ENCODE measurements at regions of chr7 and their contacts with region 1.

Region 1: DNA sequence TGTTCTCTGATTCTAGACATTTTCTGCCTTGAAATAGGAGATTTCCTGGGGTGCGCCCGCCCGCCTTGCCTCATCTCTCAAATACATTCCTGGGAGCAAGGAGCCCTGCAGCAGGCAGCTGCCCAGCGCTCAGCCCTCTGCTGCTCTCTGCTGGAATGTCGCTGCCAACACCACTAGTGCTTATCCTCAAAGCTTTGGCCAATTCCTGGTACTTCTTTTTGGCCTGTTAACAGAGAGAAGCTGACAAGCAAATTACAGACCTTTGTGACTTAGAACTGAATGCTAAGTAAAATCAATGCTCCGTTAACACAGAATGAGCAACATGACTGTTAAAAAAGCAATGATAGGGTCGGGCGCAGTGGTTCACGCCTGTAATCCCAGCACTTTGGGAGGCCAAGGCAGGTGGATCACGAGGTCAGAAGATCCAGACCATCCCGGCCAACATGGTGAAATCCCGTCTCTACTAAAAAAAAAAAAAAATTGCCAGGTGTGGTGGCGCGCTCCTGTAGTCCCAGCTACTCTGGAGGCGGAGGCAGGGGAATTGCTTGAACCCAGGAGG is 41.9 kb upstream of the SYPL1 start:
- DNase-seq: peak; percentile 62 to 85 (median 69)
- ATAC-seq: peak; percentile 98
- H3K4me3 ChIP-seq: no peak overlapping the region
- H3K4me3 Mint-ChIP-seq: no peak overlapping the region
- H3K27ac ChIP-seq: no peak overlapping the region
- H3K27ac Mint-ChIP-seq: no peak overlapping the region
- H3K4me1 ChIP-seq: peaks cover 5% of the 10 kb centered on the region
- H3K4me1 Mint-ChIP-seq: peaks cover 5% of the 10 kb centered on the region
- H3K27me3 ChIP-seq: peaks cover 0 to 6% of the 10 kb centered on the region in 2 experiments
- H3K27me3 Mint-ChIP-seq: peaks cover 28% of the 10 kb centered on the region
- CTCF ChIP-seq: peak; percentile 92

Region 2: DNA sequence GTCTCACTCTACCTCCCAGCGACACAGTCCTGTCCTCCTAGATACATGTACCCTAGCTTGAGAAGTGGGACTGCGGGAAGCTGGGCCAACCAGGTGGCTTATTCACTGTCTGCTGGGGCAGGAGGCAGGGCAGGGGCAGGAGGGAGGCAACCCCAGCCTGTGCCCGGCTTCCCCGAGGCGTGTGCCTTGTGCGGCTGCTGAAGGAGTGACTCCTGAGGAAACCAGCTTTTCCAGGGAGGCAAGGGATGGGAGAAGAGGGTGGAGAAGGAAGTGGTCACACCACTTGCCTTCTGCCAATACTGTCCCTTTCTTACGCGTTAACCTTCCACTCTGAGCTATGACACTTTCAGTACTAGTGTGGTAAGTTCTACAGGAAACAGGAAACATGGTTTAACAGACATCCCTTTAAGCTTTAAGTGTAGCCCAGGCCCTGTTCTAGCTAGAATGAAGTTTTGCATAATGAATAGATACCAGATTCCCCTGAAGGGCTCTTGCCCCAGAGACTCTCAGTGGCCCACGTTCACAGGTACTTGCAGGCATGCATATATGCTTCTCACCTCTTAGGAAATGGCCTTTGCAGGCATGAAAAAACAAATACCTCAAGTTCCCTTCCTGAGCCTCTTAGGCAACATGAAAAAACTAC is 82.5 kb before region 1 on chr7:
- CTCF ChIA-PET with region 1: interaction called, 4 read pairs
- POLR2A ChIA-PET with region 1: interaction called, 10 read pairs
- intact Hi-C with region 1: no loop called
- DNase-seq: peak in 13 of 14 experiments; percentile 11 to 83 (median 34)
- ATAC-seq: peak; percentile 95
- H3K4me3 ChIP-seq: peak overlapping the region; percentile 44
- H3K4me3 Mint-ChIP-seq: peak overlapping the region; percentile 54
- H3K27ac ChIP-seq: peak overlapping the region; percentile 79 to 86
- H3K27ac Mint-ChIP-seq: peak overlapping the region; percentile 95
- H3K4me1 ChIP-seq: peaks cover 44% of the 10 kb centered on the region
- H3K4me1 Mint-ChIP-seq: peaks cover 63% of the 10 kb centered on the region
- H3K27me3 ChIP-seq: no peaks in the 10 kb centered on the region
- H3K27me3 Mint-ChIP-seq: no peaks in the 10 kb centered on the region
- CTCF ChIP-seq: no peak

Region 3: DNA sequence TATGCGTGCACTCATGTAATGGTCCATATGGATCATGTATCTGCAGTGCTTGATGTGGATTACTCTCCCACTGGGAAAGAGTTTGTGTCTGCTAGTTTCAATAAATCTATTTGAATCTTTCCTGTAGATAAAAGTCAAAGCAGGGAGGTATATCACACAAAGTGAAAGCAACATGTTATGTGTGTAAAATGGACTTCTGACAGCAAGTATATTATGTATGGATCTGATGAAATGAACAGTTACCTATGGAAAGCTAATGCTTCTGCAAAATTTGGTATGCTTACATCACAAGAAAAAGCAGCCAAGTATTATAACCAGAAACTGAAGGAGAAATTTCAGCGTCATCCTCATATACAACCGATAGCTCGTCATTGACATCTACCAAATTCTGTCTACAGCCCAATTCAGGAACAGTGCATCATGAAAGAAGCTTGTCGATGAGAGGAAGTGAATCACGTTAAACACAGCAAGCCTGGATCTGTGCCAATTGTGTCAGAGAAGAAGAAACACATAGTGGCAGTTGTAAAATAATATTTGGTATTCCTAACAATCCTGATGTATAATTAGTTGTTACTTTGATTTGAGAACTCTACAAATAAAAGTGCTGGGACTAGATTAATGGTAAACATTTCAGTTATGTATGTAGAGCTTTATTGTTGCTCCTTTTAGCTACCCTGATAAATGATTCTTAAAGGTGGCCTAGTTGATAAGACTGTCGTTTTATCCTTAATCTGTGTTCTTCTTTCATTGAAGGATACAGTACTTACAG is 27.6 kb before region 1 on chr7:
- CTCF ChIA-PET with region 1: interaction called, 10 read pairs
- POLR2A ChIA-PET with region 1: no interaction called
- intact Hi-C with region 1: no loop called
- DNase-seq: peak in 12 of 14 experiments; percentile 10 to 78 (median 54)
- ATAC-seq: peak; percentile 97
- H3K4me3 ChIP-seq: no peak overlapping the region
- H3K4me3 Mint-ChIP-seq: peak overlapping the region; percentile 65
- H3K27ac ChIP-seq: no peak overlapping the region
- H3K27ac Mint-ChIP-seq: peak overlapping the region; percentile 61
- H3K4me1 ChIP-seq: no peaks in the 10 kb centered on the region
- H3K4me1 Mint-ChIP-seq: peaks cover 15% of the 10 kb centered on the region
- H3K27me3 ChIP-seq: no peaks in the 10 kb centered on the region
- H3K27me3 Mint-ChIP-seq: no peaks in the 10 kb centered on the region
- CTCF ChIP-seq: no peak